ENCODE measurements at regions of chr4 and their contacts with region 1.

Region 1: DNA sequence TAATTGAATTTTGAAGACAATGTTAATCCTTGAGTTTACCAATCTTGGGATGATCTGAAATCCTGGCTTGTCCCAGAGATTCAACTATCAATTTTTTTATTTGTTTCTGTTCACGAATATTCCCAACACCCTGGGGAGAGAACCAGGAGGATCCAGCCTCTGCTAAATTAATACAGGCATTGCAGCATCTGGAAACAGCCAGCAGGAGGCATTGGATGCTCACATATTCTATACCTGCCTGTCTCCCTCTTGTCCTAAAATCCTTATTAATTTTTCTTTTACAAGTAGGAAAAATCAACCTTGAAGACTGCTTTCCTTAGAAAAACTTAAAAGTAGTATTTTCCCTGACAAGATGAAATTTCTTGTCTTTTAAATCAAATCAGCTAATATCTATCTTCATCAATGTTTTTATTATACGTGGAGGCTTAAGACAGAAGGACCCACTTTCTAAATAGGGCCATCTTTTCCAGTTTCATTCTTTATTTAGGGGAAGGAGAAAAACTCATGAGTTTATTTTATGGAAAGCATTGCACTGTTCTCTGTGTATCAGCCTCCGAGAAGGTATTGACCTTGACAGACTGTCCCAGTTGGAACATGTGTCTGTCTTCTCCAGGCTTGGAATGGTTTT is 102.4 kb downstream of the CLNK start:
- DNase-seq: peak; percentile 29
- ATAC-seq: no peak
- H3K4me3 Mint-ChIP-seq: no peak overlapping the region
- H3K27ac Mint-ChIP-seq: no peak overlapping the region
- H3K4me1 Mint-ChIP-seq: peaks cover 12% of the 10 kb centered on the region
- H3K27me3 Mint-ChIP-seq: no peaks in the 10 kb centered on the region
- CTCF ChIP-seq: peak; percentile 84

Region 2: DNA sequence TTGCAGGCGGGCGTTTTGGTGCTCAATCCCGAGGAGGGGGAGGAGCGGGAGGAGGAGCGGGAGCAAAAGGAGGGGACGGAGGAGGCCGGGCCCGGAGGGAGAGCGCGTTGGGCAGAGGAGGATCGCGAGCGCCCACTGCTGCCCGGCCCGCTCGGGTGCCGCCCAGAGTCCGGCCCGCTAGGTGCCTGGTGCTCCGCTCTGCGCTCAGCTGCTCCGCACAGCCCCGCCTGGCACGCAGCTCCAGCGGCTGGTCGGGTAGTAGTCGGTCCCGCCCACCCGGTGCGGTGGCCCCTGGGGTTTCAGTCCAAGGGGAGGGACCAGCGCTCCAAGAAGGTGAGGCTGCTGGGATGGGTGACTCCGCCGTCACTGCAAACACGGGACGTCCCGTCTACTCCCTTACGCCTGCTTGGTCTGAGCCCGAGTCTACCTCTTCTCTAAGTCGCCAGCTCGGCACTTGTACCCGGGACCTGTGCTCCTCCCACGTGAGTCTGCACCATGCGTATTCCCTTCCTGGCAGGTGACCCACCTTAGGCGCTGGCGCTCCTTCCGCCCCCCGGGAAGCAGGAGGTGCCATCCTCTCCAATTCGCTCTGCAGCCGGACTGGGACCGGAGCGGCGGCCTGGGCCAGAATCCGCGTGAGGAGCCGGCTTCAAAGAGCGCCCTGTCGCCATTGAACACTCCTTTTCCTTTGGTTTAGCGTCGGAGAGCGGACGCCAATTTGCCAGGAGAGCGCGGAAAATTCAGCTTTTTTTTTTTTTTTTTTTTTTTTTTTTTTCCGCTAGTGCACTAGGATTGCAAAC is 846.9 kb after region 1 on chr4:
- CTCF ChIA-PET with region 1: interaction called, 3 read pairs
- POLR2A ChIA-PET with region 1: no interaction called
- intact Hi-C with region 1: loop called (anchors 5 kb)
- DNase-seq: peak; percentile 55
- ATAC-seq: peak; percentile 82
- H3K4me3 Mint-ChIP-seq: peak overlapping the region; percentile 58
- H3K27ac Mint-ChIP-seq: no peak overlapping the region
- H3K4me1 Mint-ChIP-seq: peaks cover 12% of the 10 kb centered on the region
- H3K27me3 Mint-ChIP-seq: peaks cover 40% of the 10 kb centered on the region
- CTCF ChIP-seq: no peak

Measured in activated CD8-positive, alpha-beta T cell treated with anti-CD3 and anti-CD28 coated beads for 36 hours (primary cell).